ENCODE measurements at regions of chr1 and their contacts with region 1.

Region 1: GRCh38 chr1:207124389-207124788 is 20.4 kb downstream of the C4BPA start:
- DNase-seq: no peak
- H3K4me3 ChIP-seq: no peak overlapping the region
- H3K27ac ChIP-seq: no peak overlapping the region
- H3K4me1 ChIP-seq: no peaks in the 10 kb centered on the region
- H3K27me3 ChIP-seq: no peaks in the 10 kb centered on the region
- CTCF ChIP-seq: no peak

Region 2: DNA sequence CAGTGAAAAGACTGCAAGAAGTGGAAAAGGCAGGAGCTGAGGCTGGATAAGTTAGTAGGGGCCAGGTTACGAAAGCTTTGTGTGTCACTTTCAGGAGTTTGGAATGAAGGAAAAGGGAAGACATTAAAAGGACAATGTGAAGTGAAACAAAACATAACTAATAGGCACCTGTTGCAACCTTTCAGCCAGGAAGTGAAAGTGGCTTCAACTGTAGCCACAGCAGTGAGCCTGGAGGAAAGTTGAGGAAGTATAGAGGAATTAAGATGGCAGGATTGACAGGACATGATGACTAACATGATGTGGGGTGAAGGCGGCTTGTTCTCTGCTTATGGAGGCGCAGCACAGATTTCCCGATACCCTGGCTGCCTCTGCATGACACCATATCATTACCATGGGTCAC is 48.5 kb after region 1 on chr1:
- dilution Hi-C with region 1: loop called (anchors 5 kb)
- DNase-seq: no peak
- H3K4me3 ChIP-seq: no peak overlapping the region
- H3K27ac ChIP-seq: no peak overlapping the region
- H3K4me1 ChIP-seq: no peaks in the 10 kb centered on the region
- H3K27me3 ChIP-seq: no peaks in the 10 kb centered on the region
- CTCF ChIP-seq: no peak

Measured in keratinocyte (primary cell).